Gastrocnemius medialis (tissue), 4 donors: ENCODE measurements at regions of chr11 and their contacts with region 1.

Region 1: DNA sequence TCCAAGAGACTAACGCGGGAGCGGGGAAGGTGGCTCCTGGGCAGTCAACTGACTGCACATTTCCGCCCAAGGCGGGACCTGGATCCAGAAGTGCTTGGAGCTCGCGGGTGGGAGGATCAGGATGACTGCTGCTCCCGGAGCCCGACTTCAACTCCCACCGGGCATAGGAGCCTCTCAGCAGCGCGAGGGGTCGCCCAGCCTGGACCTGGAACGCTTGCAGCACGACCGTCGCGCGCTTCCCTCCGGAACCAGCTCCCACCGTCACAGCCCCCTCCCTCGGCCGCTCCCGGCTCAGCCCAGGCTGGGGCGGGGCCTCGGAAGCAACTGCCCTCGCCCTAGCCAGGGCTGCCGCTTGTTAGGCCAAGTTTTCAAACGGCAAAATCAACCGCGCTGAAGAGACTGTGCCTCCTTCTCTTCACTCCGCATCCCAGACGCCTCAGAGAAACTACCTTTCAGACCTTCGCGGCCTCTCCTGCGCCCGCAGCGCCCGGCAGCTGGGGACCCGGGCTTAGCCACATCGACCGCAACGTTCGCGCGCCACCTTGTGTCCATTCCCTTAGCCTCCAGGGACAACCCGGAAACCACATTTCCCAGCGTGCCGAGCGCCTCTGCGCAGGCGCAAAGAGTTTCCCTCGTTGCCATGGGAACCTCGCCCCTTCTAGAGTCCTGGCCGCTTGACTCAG is 14.0 kb downstream of the SSH3 start:
- DNase-seq: peak; percentile 91 to 93
- ATAC-seq: peak; percentile 93 to 95
- H3K4me3 ChIP-seq: peak overlapping the region; percentile 78 to 96 (median 88)
- H3K27ac ChIP-seq: peak overlapping the region; percentile 88 to 92 (median 90)
- H3K4me1 ChIP-seq: peaks cover 7 to 17% of the 10 kb centered on the region in 2 donors
- H3K27me3 ChIP-seq: no peaks in the 10 kb centered on the region
- CTCF ChIP-seq: peak; percentile 97 to 100 (median 99)
- POLR2A ChIP-seq: peak; percentile 48 to 61

Region 2: GRCh38 chr11:67118801-67119584 is 198.4 kb before region 1 on chr11 and contains the start of gene KDM2A:
- in situ Hi-C with region 1: no loop called
- intact Hi-C with region 1: loop called (anchors 1 kb)
- DNase-seq: peak; percentile 99
- ATAC-seq: peak; percentile 82 to 85
- H3K4me3 ChIP-seq: peak within 1 kb of the TSS; percentile 82 to 98 (median 94)
- H3K27ac ChIP-seq: peak within 1 kb of the TSS; percentile 98 to 100 (median 99)
- H3K4me1 ChIP-seq: peaks cover 26 to 35% of the 10 kb centered on the region in 2 donors
- H3K27me3 ChIP-seq: no peaks in the 10 kb centered on the region
- CTCF ChIP-seq: peak in 1 of 5 experiments; percentile 27
- POLR2A ChIP-seq: peak; percentile 73 to 84
- total RNA-seq, gene KDM2A: 34.8 to 55.0 (median 44.9) TPM

Region 3: DNA sequence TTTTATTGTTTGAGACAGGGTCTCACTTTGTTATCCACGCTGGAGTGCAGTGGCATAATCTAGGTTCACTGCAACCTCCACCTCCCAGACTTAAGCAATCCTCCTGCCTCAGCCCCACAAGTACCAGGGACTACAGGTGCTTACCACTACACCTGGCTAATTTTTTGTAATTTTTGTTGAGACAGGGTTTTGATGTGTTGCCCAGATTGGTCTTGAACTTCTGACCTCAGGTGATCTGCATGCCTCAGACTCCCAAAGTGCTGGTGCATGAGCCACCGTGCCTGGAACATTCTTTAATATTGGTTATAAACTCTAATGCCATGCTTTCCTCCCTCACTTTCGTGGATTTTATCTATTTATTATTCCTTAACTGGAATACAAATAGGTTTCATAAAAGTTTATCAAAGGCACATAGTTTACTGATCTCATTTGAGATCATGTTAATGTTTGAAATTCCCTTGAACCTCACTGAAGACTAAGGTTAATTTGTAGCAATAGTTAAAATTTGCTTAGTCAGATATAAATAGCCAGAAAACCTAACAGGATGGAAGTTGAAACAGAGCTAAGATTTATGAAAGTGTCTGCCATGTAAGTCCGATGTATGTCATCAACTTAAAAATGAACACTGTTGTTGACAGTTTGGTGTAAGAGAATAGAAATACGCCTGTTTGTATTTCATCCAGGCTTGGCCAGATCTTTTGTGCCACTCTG is 170.7 kb before region 1 on chr11:
- in situ Hi-C with region 1: no loop called
- intact Hi-C with region 1: no loop called
- DNase-seq: no peak
- ATAC-seq: no peak
- H3K4me3 ChIP-seq: no peak overlapping the region
- H3K27ac ChIP-seq: no peak overlapping the region
- H3K4me1 ChIP-seq: peaks cover 0 to 5% of the 10 kb centered on the region in 2 donors
- H3K27me3 ChIP-seq: no peaks in the 10 kb centered on the region
- CTCF ChIP-seq: no peak
- POLR2A ChIP-seq: no peak

Region 4: GRCh38 chr11:67265633-67266423 is 51.5 kb before region 1 on chr11:
- in situ Hi-C with region 1: loop called in 3 of 4 experiments (anchors 5 to 10 kb)
- intact Hi-C with region 1: loop called (anchors 1 kb)
- DNase-seq: peak; percentile 58 to 70
- ATAC-seq: peak; percentile 74 to 77
- H3K4me3 ChIP-seq: peak overlapping the region; percentile 8 to 44 (median 21)
- H3K27ac ChIP-seq: peak overlapping the region; percentile 67 to 86 (median 74)
- H3K4me1 ChIP-seq: peaks cover 41 to 59% of the 10 kb centered on the region in 2 donors
- H3K27me3 ChIP-seq: no peaks in the 10 kb centered on the region
- CTCF ChIP-seq: peak; percentile 71 to 96 (median 85)
- POLR2A ChIP-seq: no peak

Region 5: GRCh38 chr11:67288452-67289225 is 28.7 kb before region 1 on chr11:
- in situ Hi-C with region 1: no loop called
- intact Hi-C with region 1: loop called (anchors 1 kb)
- DNase-seq: peak; percentile 66 to 76
- ATAC-seq: peak; percentile 71 to 74
- H3K4me3 ChIP-seq: peak overlapping the region; percentile 65 to 92 (median 74)
- H3K27ac ChIP-seq: peak overlapping the region; percentile 71 to 91 (median 84)
- H3K4me1 ChIP-seq: peaks cover 20 to 21% of the 10 kb centered on the region in 2 donors
- H3K27me3 ChIP-seq: no peaks in the 10 kb centered on the region
- CTCF ChIP-seq: peak in 4 of 5 experiments; percentile 47 to 69 (median 62)
- POLR2A ChIP-seq: peak; percentile 23 to 30